ENCODE measurements at regions of chr4 and their contacts with region 1.

Region 1: DNA sequence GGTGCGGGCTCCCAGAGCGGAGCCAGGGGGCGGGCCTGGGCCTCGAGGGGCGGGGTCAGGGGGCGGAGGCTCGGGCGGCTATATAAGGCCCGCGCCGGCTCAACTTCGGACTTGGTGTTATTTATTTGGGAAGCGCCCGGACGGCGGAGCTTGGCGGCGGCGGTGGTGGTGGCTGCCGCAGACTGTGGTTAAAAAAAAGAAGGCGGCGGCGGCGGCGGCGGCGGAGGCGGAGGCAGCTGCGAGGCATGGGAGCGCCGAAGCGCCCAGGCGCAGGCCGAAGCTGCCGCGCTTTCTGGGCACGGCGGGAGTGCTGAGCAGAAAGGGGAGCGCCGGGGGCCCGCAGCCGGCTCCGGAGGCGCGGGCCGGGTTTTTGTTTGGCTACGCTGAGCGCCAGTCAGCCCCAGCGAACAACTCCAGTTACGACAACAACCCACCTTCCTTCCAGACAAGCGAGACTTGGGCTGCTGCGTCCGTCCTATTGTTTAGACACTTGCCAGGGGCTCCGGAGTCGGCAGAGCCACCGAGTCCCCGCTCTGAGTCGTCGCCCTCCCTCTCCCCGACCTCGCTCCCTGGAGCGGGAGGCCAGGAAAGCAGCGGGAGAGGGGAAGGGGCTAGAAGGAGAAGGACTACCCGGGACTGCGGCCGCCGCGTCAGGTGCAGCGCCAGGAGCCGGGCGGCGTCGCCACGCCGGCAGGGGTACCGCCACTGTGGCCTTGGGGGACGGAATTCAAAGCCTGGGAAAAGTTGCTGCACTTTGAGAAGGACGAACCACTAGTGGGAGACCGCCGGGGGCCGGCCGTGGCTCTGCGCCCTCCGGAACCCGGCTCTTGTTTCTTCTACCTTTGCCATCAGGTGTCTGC is at the start of gene SLIT2:
- H3K4me3 ChIP-seq: peak within 1 kb of the TSS; percentile 84
- H3K27ac ChIP-seq: peak within 1 kb of the TSS; percentile 94
- H3K4me1 ChIP-seq: 0 out of 2 replicates have a peak, but pooled peaks cover 3% of the 10 kb centered on the region
- CTCF ChIP-seq: no peak

Region 2: DNA sequence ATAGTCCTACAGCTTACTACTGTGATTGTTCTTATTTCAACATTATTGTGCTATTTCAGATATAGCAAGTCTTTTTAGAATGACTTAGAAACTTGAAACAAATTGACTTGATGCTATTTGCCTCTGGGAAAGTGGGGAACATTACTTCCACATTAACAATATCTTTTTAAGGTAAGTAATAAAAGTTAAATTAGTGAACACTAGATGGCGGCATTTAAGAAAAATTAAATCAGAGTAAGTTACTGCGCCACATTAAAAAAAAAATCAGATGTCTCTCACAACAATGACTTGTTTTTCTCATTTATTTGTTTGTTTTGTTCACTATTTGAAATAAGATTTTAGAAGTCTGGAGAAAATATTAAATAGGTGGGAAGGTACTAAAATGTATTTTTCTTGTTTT is 1027.2 kb before region 1 on chr4:
- CTCF ChIA-PET with region 1: interaction called, 10 read pairs
- POLR2A ChIA-PET with region 1: no interaction called
- H3K4me3 ChIP-seq: no peak overlapping the region
- H3K27ac ChIP-seq: no peak overlapping the region
- H3K4me1 ChIP-seq: no peaks in the 10 kb centered on the region
- CTCF ChIP-seq: no peak

Region 3: GRCh38 chr4:20266215-20267082 is 14.4 kb after region 1 on chr4:
- CTCF ChIA-PET with region 1: interaction called, 5 read pairs
- POLR2A ChIA-PET with region 1: interaction called, 26 read pairs
- H3K4me3 ChIP-seq: no peak overlapping the region
- H3K27ac ChIP-seq: no peak overlapping the region
- H3K4me1 ChIP-seq: no peaks in the 10 kb centered on the region
- CTCF ChIP-seq: no peak